Right cardiac atrium (tissue), 5 donors: ENCODE measurements at regions of chr4 and their contacts with region 1.

Region 1: GRCh38 chr4:16001484-16001858 is 38.5 kb upstream of the FGFBP2 start:
- DNase-seq: peak; percentile 55 to 75 (median 68)
- ATAC-seq: peak; percentile 91 to 93
- H3K4me3 ChIP-seq: no peak overlapping the region
- H3K27ac ChIP-seq: no peak overlapping the region
- H3K4me1 ChIP-seq: no peaks in the 10 kb centered on the region
- H3K27me3 ChIP-seq: no peaks in the 10 kb centered on the region

Region 2: DNA sequence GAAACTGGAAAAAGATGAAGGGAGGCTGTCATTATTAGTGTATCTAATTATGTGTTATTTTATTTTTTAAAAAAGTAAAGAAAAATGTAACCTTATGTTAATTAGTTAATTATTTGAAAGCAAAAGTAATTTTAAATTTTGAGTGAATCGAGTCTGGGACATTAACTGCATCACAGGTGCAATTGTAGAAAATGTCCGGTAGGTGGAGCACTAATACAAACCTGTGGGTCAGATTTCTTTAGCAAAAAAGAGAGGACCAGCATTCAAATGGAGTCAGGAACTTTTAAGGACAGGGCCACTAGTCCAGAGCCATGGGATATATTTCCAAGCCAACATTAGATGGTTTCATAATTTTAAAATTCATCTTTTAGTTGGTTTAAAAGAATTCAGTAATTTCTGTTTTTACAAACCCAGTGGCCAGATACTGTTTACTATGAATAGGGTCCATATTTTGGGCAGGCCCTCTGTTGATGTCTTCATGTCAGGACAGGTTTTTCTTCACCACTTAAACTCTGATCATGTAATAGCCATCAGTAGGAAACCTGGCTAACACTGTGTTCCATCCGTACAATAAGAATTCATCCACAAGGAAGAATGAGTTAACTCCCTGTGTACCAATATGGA is 271.4 kb before region 1 on chr4:
- intact Hi-C with region 1: loop called in 1 of 4 experiments (anchors 10 kb)
- DNase-seq: no peak
- ATAC-seq: peak; percentile 57
- H3K4me3 ChIP-seq: no peak overlapping the region
- H3K27ac ChIP-seq: no peak overlapping the region
- H3K4me1 ChIP-seq: no peaks in the 10 kb centered on the region
- H3K27me3 ChIP-seq: no peaks in the 10 kb centered on the region

Region 3: DNA sequence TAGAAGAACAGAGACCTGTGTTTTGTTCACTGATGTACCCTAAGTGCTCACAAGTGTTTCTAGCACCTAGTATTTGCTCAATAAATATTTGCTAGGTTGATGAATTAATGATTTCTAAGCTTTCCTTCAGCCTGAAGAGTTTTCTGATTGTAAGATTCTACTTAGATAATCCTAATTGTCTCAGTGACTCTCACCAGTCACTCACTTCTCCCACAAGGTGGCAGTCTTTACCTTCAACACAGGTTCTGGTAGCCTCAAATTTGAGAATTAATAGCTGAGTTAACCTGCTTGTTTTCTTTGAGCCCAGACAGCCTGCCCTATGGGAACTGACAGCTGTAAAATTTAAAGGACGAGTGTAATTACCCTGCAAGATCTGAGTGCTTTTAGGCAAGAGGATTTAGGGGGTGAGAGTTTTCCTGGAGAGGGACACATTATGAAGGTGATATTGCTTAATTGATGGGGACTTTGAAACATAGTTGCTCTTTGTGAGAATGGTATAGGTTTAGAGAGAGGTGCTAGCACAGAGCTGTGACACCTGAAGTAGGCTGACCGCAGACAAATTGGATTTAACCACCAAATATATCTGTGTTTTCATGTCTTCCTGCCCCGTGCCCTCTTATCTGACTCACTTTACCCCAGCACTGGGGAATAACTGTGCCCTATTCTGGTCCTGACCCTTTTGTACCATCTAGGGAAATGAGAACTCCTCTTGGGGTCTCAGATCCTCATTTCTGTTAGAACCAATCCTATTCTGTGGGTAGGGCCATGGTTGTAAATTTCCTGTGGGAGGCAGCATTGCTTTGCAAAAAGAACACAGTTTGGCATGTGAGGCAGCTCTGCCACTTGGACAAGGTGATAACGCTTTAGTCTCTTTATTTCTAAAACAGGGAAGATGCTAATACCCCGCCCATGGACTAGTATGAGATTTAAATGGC is 195.6 kb before region 1 on chr4:
- intact Hi-C with region 1: loop called in 2 of 4 experiments (anchors 5 to 10 kb)
- DNase-seq: no peak
- ATAC-seq: peak; percentile 79
- H3K4me3 ChIP-seq: no peak overlapping the region
- H3K27ac ChIP-seq: no peak overlapping the region
- H3K4me1 ChIP-seq: no peaks in the 10 kb centered on the region
- H3K27me3 ChIP-seq: no peaks in the 10 kb centered on the region

Region 4: GRCh38 chr4:15882675-15883086 is 118.8 kb before region 1 on chr4:
- intact Hi-C with region 1: loop called in 3 of 4 experiments (anchors 5 kb)
- DNase-seq: peak in 2 of 3 donors; percentile 40 to 55
- ATAC-seq: peak; percentile 86 to 87
- H3K4me3 ChIP-seq: no peak overlapping the region
- H3K27ac ChIP-seq: no peak overlapping the region
- H3K4me1 ChIP-seq: no peaks in the 10 kb centered on the region
- H3K27me3 ChIP-seq: no peaks in the 10 kb centered on the region

Region 5: DNA sequence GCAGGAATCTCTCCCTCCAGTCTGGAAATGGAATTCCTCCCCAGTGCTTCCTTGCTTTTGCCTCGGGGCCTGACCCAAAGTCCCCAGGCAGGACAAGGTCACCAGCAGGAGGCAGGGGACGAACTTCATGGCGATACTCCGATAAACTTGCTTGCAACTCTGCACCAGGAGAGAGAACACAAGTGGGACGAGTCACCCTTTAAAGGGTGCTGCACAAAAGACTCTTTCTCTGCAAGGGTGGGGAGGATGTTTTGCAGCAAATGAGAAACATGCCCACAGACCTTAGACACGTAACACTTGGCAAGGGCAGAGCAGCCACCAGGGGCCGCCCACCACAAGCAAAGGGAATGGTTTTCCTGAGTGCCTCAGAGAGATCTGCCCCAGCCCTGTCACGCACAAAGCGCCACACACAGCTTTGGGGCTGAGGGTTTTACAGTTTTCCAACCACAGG is 38.4 kb before region 1 on chr4 and contains the start of gene FGFBP2:
- intact Hi-C with region 1: loop called in 3 of 4 experiments (anchors 5 kb)
- DNase-seq: peak; percentile 50 to 89 (median 80)
- ATAC-seq: peak; percentile 81 to 88
- H3K4me3 ChIP-seq: no peak within 1 kb of the TSS
- H3K27ac ChIP-seq: no peak within 1 kb of the TSS
- H3K4me1 ChIP-seq: no peaks in the 10 kb centered on the region
- H3K27me3 ChIP-seq: no peaks in the 10 kb centered on the region
- total RNA-seq, gene FGFBP2: 4.0 to 18.1 (median 5.2) TPM

Region 6: GRCh38 chr4:16253127-16253960 is 251.9 kb after region 1 on chr4:
- intact Hi-C with region 1: no loop called
- DNase-seq: no peak
- ATAC-seq: no peak
- H3K4me3 ChIP-seq: no peak overlapping the region
- H3K27ac ChIP-seq: no peak overlapping the region
- H3K4me1 ChIP-seq: peaks cover 3% of the 10 kb centered on the region
- H3K27me3 ChIP-seq: no peaks in the 10 kb centered on the region